ENCODE measurements at regions of chr4 and their contacts with region 1.

Region 1: DNA sequence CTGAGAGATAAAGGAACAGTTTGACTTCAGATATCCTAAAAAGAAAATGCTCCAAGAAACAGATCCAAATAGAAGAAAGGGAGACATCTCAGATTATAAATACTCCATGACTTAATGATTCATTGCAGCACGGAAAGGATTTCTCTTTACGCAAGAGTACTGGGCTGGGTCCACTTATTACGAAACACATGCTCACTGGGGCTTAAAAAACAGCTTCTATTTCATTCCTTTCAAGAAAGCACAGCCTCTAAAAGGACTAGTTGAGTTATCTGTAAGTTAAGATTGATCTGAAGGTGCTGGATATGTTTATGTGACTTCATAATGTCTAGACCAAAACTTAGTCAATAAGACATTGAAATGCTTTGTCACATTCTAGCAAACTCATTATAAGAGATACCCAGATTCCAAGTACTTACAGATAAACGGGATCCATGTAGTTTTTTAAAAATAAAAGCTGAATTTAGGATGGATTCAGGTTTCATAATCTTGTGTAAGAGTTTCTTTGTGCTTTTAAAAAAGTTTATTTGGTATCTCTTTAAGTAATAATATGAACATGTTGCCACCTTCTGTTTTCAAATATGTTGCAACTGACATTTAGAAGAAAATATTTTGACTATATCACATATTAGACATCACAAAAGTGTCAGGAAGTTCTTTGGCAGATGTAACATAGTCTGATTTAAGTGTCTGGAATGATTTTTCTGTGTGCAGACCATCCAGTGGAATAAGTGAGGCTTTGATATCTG is 109.5 kb upstream of the MYOZ2 start:
- DNase-seq: peak in 1 of 2 donors; percentile 87
- H3K4me3 ChIP-seq: peak overlapping the region; percentile 34 to 35
- H3K27ac ChIP-seq: peak overlapping the region; percentile 95 to 96
- H3K4me1 ChIP-seq: peaks cover 14 to 34% of the 10 kb centered on the region in 2 donors
- H3K27me3 ChIP-seq: no peaks in the 10 kb centered on the region
- CTCF ChIP-seq: no peak

Region 2: DNA sequence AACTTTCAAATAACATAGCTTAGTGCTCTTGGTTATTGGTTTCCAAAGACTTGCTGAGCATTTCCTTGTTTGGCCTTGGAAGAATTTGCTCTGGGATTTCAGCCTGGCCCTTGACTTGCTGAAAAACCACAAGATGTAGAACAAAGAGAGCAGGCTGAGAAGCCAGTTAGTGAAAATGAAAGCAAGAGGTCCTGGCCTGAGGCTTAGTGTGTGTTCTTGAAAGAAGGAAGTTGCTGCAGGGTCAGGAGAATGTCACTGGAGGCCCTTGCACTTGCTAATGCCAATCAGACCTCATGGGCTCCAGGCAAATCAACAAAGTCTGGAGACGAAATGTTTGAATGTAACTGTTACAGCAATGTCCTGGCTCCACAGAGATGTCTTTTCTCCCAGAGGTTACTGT is 58.1 kb before region 1 on chr4:
- intact Hi-C with region 1: no loop called
- DNase-seq: peak in 1 of 2 donors; percentile 81
- H3K4me3 ChIP-seq: peak overlapping the region in 1 of 2 donors; percentile 24
- H3K27ac ChIP-seq: peak overlapping the region; percentile 76 to 84
- H3K4me1 ChIP-seq: peaks cover 17 to 61% of the 10 kb centered on the region in 2 donors
- H3K27me3 ChIP-seq: no peaks in the 10 kb centered on the region
- CTCF ChIP-seq: no peak

Region 3: GRCh38 chr4:118989098-118990080 is 36.7 kb before region 1 on chr4:
- intact Hi-C with region 1: loop called (anchors 5 kb)
- DNase-seq: no peak
- H3K4me3 ChIP-seq: peak overlapping the region in 1 of 2 donors; percentile 3
- H3K27ac ChIP-seq: peak overlapping the region; percentile 95 to 96
- H3K4me1 ChIP-seq: peaks cover 16 to 57% of the 10 kb centered on the region in 2 donors
- H3K27me3 ChIP-seq: no peaks in the 10 kb centered on the region
- CTCF ChIP-seq: no peak

Region 4: GRCh38 chr4:118997601-118998000 is 28.5 kb before region 1 on chr4:
- intact Hi-C with region 1: loop called (anchors 2 kb)
- DNase-seq: no peak
- H3K4me3 ChIP-seq: peak overlapping the region in 1 of 2 donors; percentile 26
- H3K27ac ChIP-seq: peak overlapping the region; percentile 94 to 95
- H3K4me1 ChIP-seq: peaks cover 9 to 37% of the 10 kb centered on the region in 2 donors
- H3K27me3 ChIP-seq: no peaks in the 10 kb centered on the region
- CTCF ChIP-seq: no peak